ENCODE measurements at regions of chr13 and their contacts with region 1.

Region 1: DNA sequence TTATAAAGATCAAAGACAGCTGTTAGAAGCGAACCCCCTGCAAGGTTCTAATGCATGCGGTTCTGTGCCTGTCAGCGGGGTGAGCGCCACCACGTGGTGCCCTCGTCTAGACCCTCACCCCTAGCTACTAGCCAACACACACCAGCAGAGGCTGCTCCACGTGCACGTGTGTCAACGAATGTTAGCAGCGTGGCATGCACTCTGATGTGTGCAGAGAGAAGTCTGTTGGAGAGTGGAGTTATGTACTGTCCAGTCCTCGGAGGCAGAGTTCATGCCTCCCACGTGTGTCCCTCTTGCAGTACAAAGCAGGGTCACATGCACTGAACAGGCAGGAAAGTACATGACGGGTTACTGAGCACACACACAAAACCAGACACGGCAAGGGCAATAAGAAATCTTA is 75.0 kb upstream of the SLC15A1 start:
- DNase-seq: no peak
- ATAC-seq: no peak
- H3K4me3 Mint-ChIP-seq: no peak overlapping the region
- H3K27ac Mint-ChIP-seq: no peak overlapping the region
- H3K4me1 Mint-ChIP-seq: peaks cover 13% of the 10 kb centered on the region
- H3K27me3 Mint-ChIP-seq: no peaks in the 10 kb centered on the region
- CTCF ChIP-seq: no peak

Region 2: DNA sequence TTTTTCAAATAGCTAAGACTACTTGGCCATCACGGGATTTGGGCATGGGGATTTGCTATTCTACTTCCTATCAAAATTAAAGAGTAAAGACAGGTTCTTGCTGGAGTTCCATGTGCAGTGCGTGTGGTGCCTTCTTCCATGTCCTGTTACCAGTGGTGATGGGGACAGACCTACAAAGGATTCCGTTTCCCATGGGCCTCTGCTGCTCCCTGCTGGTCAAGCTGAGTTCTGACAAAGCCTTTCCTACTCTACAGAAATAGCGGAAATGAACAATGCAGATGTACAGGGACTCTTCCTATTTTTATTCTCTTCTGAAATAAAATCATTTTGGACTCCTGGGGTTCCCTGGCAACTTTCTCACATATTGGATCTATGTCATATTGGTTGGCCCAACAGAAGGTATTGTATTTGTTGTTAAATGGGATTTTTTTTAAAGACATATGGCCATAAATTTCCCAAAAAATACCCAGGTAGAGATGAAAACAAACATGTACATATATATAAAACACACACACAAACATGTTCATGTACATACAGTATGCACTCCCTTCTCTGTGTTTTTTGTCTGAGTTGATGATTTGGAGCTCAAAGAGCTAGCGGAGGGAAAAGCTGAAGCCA is 15.5 kb after region 1 on chr13:
- CTCF ChIA-PET with region 1: interaction called, 21 read pairs
- POLR2A ChIA-PET with region 1: no interaction called
- intact Hi-C with region 1: no loop called
- DNase-seq: peak; percentile 69
- ATAC-seq: peak; percentile 88
- H3K4me3 Mint-ChIP-seq: no peak overlapping the region
- H3K27ac Mint-ChIP-seq: peak overlapping the region; percentile 23
- H3K4me1 Mint-ChIP-seq: peaks cover 3% of the 10 kb centered on the region
- H3K27me3 Mint-ChIP-seq: no peaks in the 10 kb centered on the region
- CTCF ChIP-seq: peak; percentile 85

Measured in activated CD8-positive, alpha-beta T cell treated with anti-CD3 and anti-CD28 coated beads for 36 hours (primary cell).